Panc1 (cell line): ENCODE measurements at regions of chr12 and their contacts with region 1.

Region 1: GRCh38 chr12:10562306-10562933 is 51.0 kb downstream of the MAGOHB start:
- DNase-seq: peak; percentile 10
- ATAC-seq: no peak
- H3K4me3 ChIP-seq: no peak overlapping the region
- H3K27ac ChIP-seq: no peak overlapping the region; the same call in 1 of the 2 replicates
- H3K4me1 ChIP-seq: no peaks in the 10 kb centered on the region; the same call in 1 of the 2 replicates
- H3K27me3 ChIP-seq: no peaks in the 10 kb centered on the region
- CTCF ChIP-seq: peak; percentile 55; the same call in 1 of the 2 replicates

Region 2: DNA sequence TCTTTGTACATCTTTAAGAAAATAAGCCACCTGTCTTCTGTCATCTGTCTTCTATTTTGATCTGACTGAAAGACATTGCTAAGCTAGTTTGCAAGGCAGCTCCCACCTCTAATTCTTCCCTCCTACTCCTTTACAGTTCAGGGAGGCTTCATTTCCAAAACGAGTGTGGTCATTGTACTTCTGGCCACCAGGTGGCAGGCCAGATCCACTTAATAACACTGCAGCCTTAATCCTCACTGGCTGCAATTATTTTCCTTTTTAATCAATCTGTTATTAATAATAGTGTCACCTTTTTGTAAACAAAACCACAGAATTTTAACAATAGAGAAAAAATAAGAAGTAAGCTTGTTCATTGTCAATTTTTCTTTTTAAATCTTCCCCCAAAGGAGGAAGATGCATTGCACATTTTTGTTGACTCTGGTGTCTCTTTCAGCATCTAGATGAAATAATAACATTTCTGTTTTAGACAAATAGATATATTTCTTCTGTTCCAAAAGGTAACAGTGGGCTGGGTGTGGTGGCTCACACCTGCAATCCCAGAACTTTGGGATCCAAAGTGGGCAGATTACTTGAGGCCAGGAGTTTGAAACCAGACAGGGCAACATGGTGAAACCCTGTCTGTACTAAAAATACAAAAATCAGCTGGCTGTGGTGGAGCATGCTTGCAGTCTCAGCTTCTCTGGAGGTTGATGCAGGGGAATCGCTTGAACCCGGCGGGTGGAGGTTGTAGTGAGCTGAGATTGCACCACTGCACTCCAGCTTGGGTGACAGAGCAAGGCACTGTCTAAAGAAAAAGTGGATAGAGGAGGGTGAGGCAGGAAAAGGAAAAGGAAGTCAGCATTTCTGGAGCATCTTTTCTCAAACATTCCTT is 326.4 kb before region 1 on chr12:
- CTCF ChIA-PET with region 1: interaction called, 3 read pairs
- POLR2A ChIA-PET with region 1: no interaction called
- in situ Hi-C with region 1: no loop called
- intact Hi-C with region 1: loop called (anchors 5 kb)
- DNase-seq: no peak
- ATAC-seq: peak; percentile 83
- H3K4me3 ChIP-seq: no peak overlapping the region
- H3K27ac ChIP-seq: peak overlapping the region; percentile 21; the same call in 1 of the 2 replicates
- H3K4me1 ChIP-seq: no peaks in the 10 kb centered on the region
- H3K27me3 ChIP-seq: no peaks in the 10 kb centered on the region
- CTCF ChIP-seq: peak; percentile 76

Region 3: GRCh38 chr12:10331642-10332239 is 230.7 kb before region 1 on chr12:
- CTCF ChIA-PET with region 1: no interaction called
- POLR2A ChIA-PET with region 1: no interaction called
- in situ Hi-C with region 1: no loop called
- intact Hi-C with region 1: loop called (anchors 2 kb)
- DNase-seq: peak; percentile 32
- ATAC-seq: peak; percentile 85
- H3K4me3 ChIP-seq: no peak overlapping the region
- H3K27ac ChIP-seq: peak overlapping the region; percentile 39; the same call in 1 of the 2 replicates
- H3K4me1 ChIP-seq: no peaks in the 10 kb centered on the region
- H3K27me3 ChIP-seq: no peaks in the 10 kb centered on the region
- CTCF ChIP-seq: peak; percentile 63; the same call in 1 of the 2 replicates

Region 4: DNA sequence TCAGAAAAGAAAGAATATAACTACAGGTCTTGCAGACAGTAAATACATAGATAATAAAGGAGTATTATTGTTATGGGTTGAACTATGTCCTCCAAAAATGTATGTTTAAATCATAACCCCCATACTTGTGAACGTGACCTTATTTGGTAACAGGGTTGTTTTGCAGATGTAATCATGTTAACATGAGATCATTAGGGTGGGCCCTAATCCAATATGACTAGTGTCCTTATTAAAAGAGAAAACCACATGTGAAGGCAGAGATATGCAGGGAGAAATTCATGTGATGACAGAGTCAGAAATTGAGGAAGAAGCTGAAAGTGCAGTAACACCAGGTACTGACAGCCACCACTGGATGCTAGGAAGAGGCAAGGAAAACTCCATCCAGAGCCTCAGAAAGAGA is 22.0 kb after region 1 on chr12:
- CTCF ChIA-PET with region 1: no interaction called
- POLR2A ChIA-PET with region 1: no interaction called
- in situ Hi-C with region 1: no loop called
- intact Hi-C with region 1: no loop called
- DNase-seq: no peak
- ATAC-seq: no peak
- H3K4me3 ChIP-seq: no peak overlapping the region
- H3K27ac ChIP-seq: no peak overlapping the region
- H3K4me1 ChIP-seq: no peaks in the 10 kb centered on the region
- H3K27me3 ChIP-seq: no peaks in the 10 kb centered on the region
- CTCF ChIP-seq: no peak

Region 5: GRCh38 chr12:10613349-10614055 is 51.1 kb after region 1 on chr12 and contains the start of gene MAGOHB:
- CTCF ChIA-PET with region 1: interaction called, 12 read pairs
- POLR2A ChIA-PET with region 1: no interaction called
- in situ Hi-C with region 1: no loop called
- intact Hi-C with region 1: no loop called
- DNase-seq: peak; percentile 74
- ATAC-seq: peak; percentile 98
- H3K4me3 ChIP-seq: peak within 1 kb of the TSS; percentile 89 to 91
- H3K27ac ChIP-seq: peak within 1 kb of the TSS; percentile 92
- H3K4me1 ChIP-seq: no peaks in the 10 kb centered on the region; the same call in 1 of the 2 replicates
- H3K27me3 ChIP-seq: no peaks in the 10 kb centered on the region
- CTCF ChIP-seq: no peak
- total RNA-seq, gene MAGOHB: 22.5 TPM

Region 6: DNA sequence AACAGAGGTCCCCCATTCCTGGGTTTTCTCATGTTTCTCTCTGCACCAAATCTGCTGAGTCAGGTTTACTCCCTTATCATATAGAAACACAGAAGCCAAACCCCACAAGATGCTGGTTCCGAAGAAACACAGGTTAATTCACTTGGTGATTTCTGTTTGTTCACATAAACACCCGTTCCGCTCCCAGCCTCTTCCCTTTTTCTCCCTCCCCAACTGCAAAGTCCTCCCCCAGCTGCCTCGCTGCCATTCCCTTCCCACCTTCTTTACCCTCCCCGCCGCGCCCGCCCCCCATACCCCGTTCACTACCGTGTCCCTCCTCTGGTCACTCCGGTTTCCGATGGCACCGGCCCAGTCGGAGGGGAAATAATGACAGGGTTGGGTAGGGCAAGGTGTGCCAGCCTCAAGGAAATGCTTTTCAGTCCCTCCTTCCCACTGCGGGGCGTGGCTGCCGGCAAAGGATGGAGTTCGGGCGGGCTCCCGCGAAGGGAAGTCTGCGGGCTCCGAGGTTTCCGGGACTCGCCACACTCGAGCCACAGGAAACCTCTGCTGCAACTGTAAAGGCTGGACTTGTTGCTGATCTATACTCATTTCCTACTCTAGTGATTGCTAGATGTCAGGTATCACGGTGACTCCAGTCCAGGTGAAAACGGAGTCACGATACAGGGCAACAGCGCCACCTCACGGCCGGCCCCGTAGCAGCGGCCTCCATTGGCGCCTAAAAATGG is 111.4 kb after region 1 on chr12 and contains the start of gene STYK1:
- CTCF ChIA-PET with region 1: no interaction called
- POLR2A ChIA-PET with region 1: interaction called, 11 read pairs
- in situ Hi-C with region 1: no loop called
- intact Hi-C with region 1: no loop called
- DNase-seq: peak; percentile 42
- ATAC-seq: peak; percentile 92
- H3K4me3 ChIP-seq: peak within 1 kb of the TSS; percentile 56 to 68
- H3K27ac ChIP-seq: no peak within 1 kb of the TSS
- H3K4me1 ChIP-seq: no peaks in the 10 kb centered on the region
- H3K27me3 ChIP-seq: no peaks in the 10 kb centered on the region; the same call in 1 of the 2 replicates
- CTCF ChIP-seq: peak; percentile 92
- total RNA-seq, gene STYK1: 0.85 TPM